ENCODE measurements at regions of chr2 and their contacts with region 1.

Region 1: GRCh38 chr2:109545828-109546713 is 67.7 kb downstream of the SEPTIN10 start:
- DNase-seq: peak; percentile 64
- ATAC-seq: peak; percentile 79
- H3K4me3 Mint-ChIP-seq: no peak overlapping the region
- H3K27ac Mint-ChIP-seq: no peak overlapping the region
- H3K4me1 Mint-ChIP-seq: no peaks in the 10 kb centered on the region
- H3K27me3 Mint-ChIP-seq: peaks cover 9% of the 10 kb centered on the region

Region 2: DNA sequence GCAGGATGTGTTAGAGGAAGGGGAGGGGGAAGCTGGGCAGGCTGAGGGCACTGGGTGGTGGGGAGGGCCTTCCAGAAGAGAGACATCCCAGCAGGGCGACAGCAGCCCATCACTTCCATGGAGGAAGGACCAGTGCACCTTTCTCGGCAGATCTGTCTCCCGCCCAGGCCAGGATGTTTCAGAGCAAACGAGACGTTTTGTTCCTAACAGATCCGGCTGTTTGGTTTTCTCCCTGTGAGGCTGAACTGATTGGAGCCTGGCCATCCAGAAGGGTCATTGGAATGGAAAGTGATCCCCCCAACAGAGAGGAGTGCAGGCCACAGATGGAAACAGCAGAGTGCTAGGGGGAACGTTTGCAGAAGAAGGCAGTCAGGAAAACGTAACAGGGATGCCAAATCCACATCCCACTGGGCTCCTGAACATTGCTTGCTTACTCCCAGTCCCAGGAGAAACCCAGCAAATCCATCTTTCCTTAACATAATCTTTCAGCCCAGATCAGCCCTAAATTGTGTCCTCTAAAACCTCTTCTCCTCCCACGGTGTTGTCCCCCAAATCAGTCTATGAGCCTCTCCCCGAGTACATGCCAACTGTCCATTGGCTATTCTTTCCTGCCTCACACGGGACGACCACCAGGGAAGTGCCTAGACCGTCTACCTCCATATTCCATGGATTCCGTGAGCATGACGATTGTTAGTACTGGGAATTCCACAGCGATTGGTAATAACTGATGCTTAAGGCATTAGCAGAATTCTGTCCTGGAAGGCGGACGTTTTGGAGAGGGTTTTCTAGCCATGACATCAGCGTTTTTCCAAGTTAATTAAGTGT is 59.1 kb before region 1 on chr2:
- CTCF ChIA-PET with region 1: no interaction called
- POLR2A ChIA-PET with region 1: no interaction called
- DNase-seq: no peak
- ATAC-seq: no peak
- H3K4me3 Mint-ChIP-seq: no peak overlapping the region
- H3K27ac Mint-ChIP-seq: no peak overlapping the region
- H3K4me1 Mint-ChIP-seq: no peaks in the 10 kb centered on the region
- H3K27me3 Mint-ChIP-seq: peaks cover 2% of the 10 kb centered on the region

Region 3: DNA sequence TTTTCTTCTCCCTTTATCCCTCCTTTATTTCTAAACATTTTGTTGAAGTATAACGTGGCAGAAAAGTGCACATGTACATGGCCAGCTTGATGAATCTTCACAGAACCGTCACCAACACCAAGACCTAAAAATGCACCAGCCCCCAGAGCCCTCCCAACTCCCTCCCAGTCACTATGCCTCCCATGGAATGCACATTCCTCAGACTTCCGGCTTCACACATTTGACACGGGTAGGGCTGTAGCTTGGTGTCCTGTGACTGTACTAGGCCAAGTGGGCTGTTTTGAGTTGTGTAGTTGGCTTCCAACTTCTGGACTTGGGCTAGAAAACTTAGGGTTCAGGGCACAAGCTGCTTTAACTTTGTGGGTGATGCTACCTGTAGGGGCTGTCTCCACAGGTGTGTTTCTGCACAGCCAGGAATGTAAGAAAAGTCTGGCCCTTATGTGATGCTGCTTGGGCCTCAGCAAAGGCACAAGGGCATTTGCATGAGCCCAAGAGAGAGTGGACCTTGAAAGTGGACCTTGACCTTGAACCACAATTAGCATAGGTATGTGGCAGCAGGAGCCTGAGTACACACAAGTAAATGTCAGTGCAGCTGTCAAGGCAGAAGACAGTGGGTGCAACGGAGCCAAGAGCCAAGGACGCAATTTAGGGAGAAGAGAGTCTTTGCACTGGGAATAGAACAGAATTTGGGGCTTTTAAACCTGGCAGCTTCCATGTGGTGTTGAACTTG is 10.7 kb before region 1 on chr2:
- CTCF ChIA-PET with region 1: interaction called, 23 read pairs
- POLR2A ChIA-PET with region 1: no interaction called
- DNase-seq: no peak
- ATAC-seq: no peak
- H3K4me3 Mint-ChIP-seq: no peak overlapping the region
- H3K27ac Mint-ChIP-seq: no peak overlapping the region
- H3K4me1 Mint-ChIP-seq: no peaks in the 10 kb centered on the region
- H3K27me3 Mint-ChIP-seq: peaks cover 17% of the 10 kb centered on the region

Region 4: DNA sequence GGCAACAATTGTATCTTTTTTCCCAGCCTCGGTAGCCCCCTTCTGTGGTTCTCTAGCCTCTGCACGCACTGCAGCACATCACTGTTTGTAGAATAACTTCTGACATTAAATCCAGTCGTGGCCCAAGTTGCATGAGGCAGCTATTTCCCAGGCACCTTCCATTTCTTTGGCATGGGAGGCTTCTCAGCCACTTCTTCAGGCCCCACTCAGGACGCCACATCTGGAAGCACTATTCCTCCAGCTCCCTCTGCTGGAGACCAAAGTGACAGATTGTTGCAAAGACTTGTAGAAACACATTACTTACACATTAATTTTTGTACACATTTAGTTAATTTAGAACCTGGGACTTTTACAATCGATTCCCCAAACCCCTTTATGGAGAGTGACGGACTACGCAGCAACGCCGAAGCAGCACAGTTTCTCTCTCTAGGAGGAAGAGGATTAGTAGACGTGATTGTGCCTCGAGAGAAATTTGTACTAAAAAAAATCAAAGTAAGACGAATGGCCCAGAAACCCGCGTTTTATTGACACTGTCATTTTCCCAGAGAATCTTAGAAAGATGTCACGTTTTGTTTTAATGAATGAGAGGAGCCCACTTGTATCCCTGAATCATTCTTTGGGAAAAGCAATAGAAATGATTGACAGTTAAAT is 190.2 kb after region 1 on chr2:
- CTCF ChIA-PET with region 1: interaction called, 28 read pairs
- POLR2A ChIA-PET with region 1: no interaction called
- DNase-seq: peak; percentile 33
- ATAC-seq: no peak
- H3K4me3 Mint-ChIP-seq: no peak overlapping the region
- H3K27ac Mint-ChIP-seq: no peak overlapping the region
- H3K4me1 Mint-ChIP-seq: no peaks in the 10 kb centered on the region
- H3K27me3 Mint-ChIP-seq: peaks cover 1% of the 10 kb centered on the region